AG04450 (cell line): ENCODE measurements at regions of chr10 and their contacts with region 1.

Region 1: DNA sequence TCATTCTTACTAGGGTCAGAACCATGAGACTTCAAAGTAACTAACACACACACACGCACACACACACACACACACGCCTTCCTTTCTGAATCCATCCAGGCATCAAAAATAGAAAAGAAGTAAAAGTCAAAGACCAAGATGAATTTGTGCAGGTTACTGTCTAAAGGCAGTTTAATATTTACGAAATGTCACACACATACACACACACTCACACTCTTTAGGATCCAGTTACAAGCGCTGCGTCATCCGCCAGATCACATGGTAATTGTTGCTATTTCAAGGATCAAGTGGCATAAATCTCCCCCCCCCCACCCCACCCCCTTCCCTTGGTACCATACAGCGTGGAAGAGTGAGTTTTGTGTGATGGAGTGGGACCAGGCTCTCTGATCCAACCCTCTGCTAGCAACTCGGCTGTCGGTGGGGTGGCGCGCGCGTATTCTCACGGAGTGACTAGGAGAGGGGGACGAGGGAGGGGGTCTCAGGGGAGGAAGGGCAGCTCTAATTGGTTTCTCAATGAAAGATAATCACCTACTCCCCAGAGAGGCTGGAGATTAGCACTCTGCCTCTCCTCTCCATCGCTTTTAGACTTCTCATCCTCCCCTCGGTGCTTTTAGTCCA is 83.6 kb upstream of the PRKG1 start:
- DNase-seq: peak; percentile 70
- H3K4me3 ChIP-seq: peak overlapping the region; percentile 80
- H3K27ac ChIP-seq: peak overlapping the region; percentile 92
- H3K27me3 ChIP-seq: no peaks in the 10 kb centered on the region
- CTCF ChIP-seq: no peak

Region 2: DNA sequence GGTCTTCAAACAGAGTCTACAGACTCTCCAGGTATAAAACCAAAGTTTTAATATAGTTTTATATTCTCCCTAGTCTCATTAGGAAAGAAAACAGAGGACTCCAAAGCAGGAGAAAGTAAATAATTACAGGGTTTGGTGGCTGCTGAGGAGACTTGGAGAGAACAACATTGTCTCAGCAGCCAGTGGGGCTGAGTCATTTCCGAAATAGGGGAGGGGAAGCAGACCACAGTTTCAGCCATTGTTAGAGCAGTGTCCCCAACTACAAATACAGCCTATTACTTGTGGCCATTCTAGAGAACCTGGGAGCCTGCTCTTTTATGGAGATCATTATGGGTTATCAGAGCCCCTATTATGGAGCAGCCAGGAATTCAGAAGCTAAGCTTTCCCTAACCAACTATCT is 61.0 kb before region 1 on chr10:
- CTCF ChIA-PET with region 1: no interaction called
- POLR2A ChIA-PET with region 1: interaction called, 10 read pairs
- DNase-seq: no peak
- H3K4me3 ChIP-seq: no peak overlapping the region
- H3K27ac ChIP-seq: no peak overlapping the region
- H3K27me3 ChIP-seq: peaks cover 3% of the 10 kb centered on the region
- CTCF ChIP-seq: no peak

Region 3: DNA sequence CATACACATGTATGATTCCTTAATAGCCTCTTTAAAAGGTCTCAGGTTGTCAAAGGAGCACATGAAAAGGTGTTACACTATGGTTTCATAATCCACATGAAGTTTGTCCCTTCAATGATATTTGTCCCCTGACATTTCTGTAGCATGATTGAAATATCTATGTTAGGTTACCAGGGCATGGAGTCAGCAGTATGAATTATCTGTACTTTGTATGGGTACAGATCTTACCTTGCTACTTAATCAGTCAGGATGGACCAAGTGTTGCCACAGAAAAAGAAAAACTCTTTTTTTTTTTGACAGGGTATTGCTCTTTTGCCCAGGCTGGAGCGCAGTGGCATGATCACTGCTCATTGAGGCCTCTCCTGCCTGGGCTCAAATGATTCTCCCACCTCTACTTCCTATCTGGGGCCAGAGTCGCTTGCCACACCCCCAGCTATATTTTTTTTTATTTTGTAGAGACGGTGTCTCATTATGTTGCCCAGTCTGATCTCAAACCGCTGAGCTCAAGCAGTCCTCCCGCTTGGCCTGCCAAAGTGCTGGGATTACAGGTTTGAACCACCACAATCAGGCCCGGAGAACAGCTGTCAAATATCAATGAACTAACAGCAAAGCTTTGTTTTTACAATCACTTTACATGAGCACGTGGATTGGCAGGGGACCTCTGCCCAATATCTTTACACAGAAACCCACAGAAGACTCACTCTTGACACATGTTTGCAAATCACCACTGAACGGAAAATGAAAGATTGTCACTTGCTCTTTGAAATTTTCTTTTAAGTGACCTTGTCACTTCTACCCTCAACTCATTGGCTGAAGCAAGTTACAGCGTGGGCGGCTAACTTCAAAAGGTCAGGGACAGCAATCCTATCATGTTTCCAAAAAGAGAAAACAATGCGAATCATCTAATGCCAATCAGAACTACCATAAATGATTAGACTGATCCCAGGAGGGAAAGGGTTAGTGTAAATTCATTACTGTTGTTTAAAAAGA is 223.8 kb after region 1 on chr10:
- CTCF ChIA-PET with region 1: no interaction called
- POLR2A ChIA-PET with region 1: no interaction called
- DNase-seq: no peak
- H3K4me3 ChIP-seq: no peak overlapping the region
- H3K27ac ChIP-seq: no peak overlapping the region
- H3K27me3 ChIP-seq: no peaks in the 10 kb centered on the region
- CTCF ChIP-seq: no peak